Mammary epithelial cell (primary cell): ENCODE measurements at regions of chr19 and their contacts with region 1.

Region 1: DNA sequence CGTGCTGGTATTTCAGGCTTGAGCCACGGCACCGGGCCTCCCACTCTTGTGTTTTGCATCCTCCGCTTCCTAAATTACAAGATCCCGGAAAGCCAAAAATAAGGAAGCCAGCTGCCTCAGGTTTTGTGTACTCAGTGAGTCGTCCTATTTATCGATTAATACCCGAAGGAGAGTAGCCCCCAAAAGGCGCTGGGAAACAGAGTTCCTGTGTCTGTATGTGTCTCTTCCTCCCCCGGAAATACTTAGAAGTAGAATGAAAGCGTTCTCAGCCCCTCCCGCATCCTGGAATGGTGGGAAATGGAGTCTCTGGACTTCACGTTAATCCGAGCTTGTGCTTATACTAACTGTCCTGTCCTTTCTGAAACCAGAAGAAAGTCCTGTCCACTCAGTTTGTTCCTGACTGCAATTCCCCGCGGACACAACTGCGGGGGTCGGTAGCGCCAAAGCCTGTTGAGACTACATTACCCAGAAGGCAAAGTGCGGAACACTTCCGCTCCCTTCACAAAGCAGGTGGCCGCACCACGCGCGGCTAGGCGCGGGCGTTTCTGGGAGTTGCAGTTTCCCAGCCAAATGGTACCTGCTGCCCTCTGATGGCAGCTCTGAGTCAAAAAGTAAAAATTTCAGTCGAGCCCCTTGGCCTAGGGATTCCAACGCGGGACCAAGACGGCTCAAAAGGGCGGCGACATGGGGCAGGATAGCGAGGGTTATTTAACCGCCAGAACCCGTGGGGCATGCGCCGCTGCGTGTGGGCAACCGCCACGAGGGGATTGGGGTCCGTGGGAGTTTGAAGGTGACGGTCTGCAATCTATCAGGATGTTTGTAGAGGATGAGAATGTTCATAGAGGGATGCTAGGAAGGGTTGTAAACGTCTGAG is 2.2 kb upstream of the GSK3A start:
- DNase-seq: peak; percentile 90
- H3K4me3 ChIP-seq: peak overlapping the region; percentile 60 to 77 (median 72)
- H3K27ac ChIP-seq: peak overlapping the region; percentile 26
- H3K4me1 ChIP-seq: peaks cover 23% of the 10 kb centered on the region
- H3K27me3 ChIP-seq: no peaks in the 10 kb centered on the region
- CTCF ChIP-seq: peak; percentile 45 to 68

Region 2: GRCh38 chr19:42108527-42109389 is 135.8 kb before region 1 on chr19:
- CTCF ChIA-PET with region 1: interaction called, 3 read pairs
- dilution Hi-C with region 1: no loop called
- in situ Hi-C with region 1: loop called in 1 of 2 experiments (anchors 5 kb)
- intact Hi-C with region 1: loop called (anchors 1 kb)
- DNase-seq: peak; percentile 68
- H3K4me3 ChIP-seq: no peak overlapping the region
- H3K27ac ChIP-seq: no peak overlapping the region
- H3K4me1 ChIP-seq: peaks cover 35% of the 10 kb centered on the region
- H3K27me3 ChIP-seq: no peaks in the 10 kb centered on the region
- CTCF ChIP-seq: peak; percentile 100

Region 3: GRCh38 chr19:42132851-42133528 is 111.6 kb before region 1 on chr19:
- CTCF ChIA-PET with region 1: no interaction called
- dilution Hi-C with region 1: no loop called
- in situ Hi-C with region 1: no loop called
- intact Hi-C with region 1: loop called (anchors 1 kb)
- DNase-seq: peak; percentile 41
- H3K4me3 ChIP-seq: peak overlapping the region in 1 of 3 experiments; percentile 38
- H3K27ac ChIP-seq: no peak overlapping the region
- H3K4me1 ChIP-seq: peaks cover 33% of the 10 kb centered on the region
- H3K27me3 ChIP-seq: no peaks in the 10 kb centered on the region
- CTCF ChIP-seq: peak; percentile 55 to 94

Region 4: GRCh38 chr19:42219812-42220750 is 24.5 kb before region 1 on chr19 and contains the start of gene ZNF526:
- CTCF ChIA-PET with region 1: no interaction called
- dilution Hi-C with region 1: no loop called
- in situ Hi-C with region 1: no loop called
- intact Hi-C with region 1: loop called (anchors 1 kb)
- DNase-seq: peak; percentile 96
- H3K4me3 ChIP-seq: peak within 1 kb of the TSS; percentile 80 to 95 (median 85)
- H3K27ac ChIP-seq: peak within 1 kb of the TSS; percentile 65
- H3K4me1 ChIP-seq: peaks cover 27% of the 10 kb centered on the region
- H3K27me3 ChIP-seq: no peaks in the 10 kb centered on the region
- CTCF ChIP-seq: no peak
- total RNA-seq, gene ZNF526: 11.2 to 15.8 TPM

Region 5: GRCh38 chr19:42268704-42269477 is 24.3 kb after region 1 on chr19 and contains the start of gene CIC:
- CTCF ChIA-PET with region 1: interaction called, 3 read pairs
- dilution Hi-C with region 1: no loop called
- in situ Hi-C with region 1: no loop called
- intact Hi-C with region 1: loop called (anchors 1 kb)
- DNase-seq: peak; percentile 100
- H3K4me3 ChIP-seq: peak within 1 kb of the TSS; percentile 71 to 78 (median 73)
- H3K27ac ChIP-seq: peak within 1 kb of the TSS; percentile 98
- H3K4me1 ChIP-seq: peaks cover 33% of the 10 kb centered on the region
- H3K27me3 ChIP-seq: no peaks in the 10 kb centered on the region
- CTCF ChIP-seq: no peak
- total RNA-seq, gene CIC: 37.0 to 91.0 TPM

Region 6: GRCh38 chr19:42295831-42296525 is 51.4 kb after region 1 on chr19:
- CTCF ChIA-PET with region 1: no interaction called
- dilution Hi-C with region 1: no loop called
- in situ Hi-C with region 1: no loop called
- intact Hi-C with region 1: loop called (anchors 1 kb)
- DNase-seq: peak; percentile 48
- H3K4me3 ChIP-seq: no peak overlapping the region
- H3K27ac ChIP-seq: no peak overlapping the region
- H3K4me1 ChIP-seq: no peaks in the 10 kb centered on the region
- H3K27me3 ChIP-seq: no peaks in the 10 kb centered on the region
- CTCF ChIP-seq: peak; percentile 88 to 95

Region 7: GRCh38 chr19:42423462-42424344 is 179.1 kb after region 1 on chr19:
- CTCF ChIA-PET with region 1: no interaction called
- dilution Hi-C with region 1: no loop called
- in situ Hi-C with region 1: no loop called
- intact Hi-C with region 1: loop called (anchors 5 kb)
- DNase-seq: peak; percentile 86
- H3K4me3 ChIP-seq: peak overlapping the region; percentile 59 to 66 (median 63)
- H3K27ac ChIP-seq: peak overlapping the region; percentile 12
- H3K4me1 ChIP-seq: peaks cover 45% of the 10 kb centered on the region
- H3K27me3 ChIP-seq: no peaks in the 10 kb centered on the region
- CTCF ChIP-seq: no peak